ENCODE measurements at regions of chr12 and their contacts with region 1.

Region 1: GRCh38 chr12:95959107-95959506 is 16.0 kb downstream of the AMDHD1 start:
- DNase-seq: peak; percentile 14
- H3K4me3 Mint-ChIP-seq: no peak overlapping the region
- H3K27ac Mint-ChIP-seq: no peak overlapping the region
- H3K4me1 Mint-ChIP-seq: no peaks in the 10 kb centered on the region
- H3K27me3 Mint-ChIP-seq: no peaks in the 10 kb centered on the region

Region 2: GRCh38 chr12:95970905-95971304 is 11.8 kb after region 1 on chr12:
- CTCF ChIA-PET with region 1: interaction called, 10 read pairs
- POLR2A ChIA-PET with region 1: no interaction called
- DNase-seq: no peak
- H3K4me3 Mint-ChIP-seq: no peak overlapping the region
- H3K27ac Mint-ChIP-seq: no peak overlapping the region
- H3K4me1 Mint-ChIP-seq: no peaks in the 10 kb centered on the region
- H3K27me3 Mint-ChIP-seq: no peaks in the 10 kb centered on the region

Measured in activated CD4-positive, alpha-beta T cell treated with anti-CD3 and anti-CD28 coated beads, Interleukin-2, amount 10 ng/mL, durations not matched to agents 7 days and 5 days (primary cell).